GM12878 (cell line): ENCODE measurements at regions of chr2 and their contacts with region 1.

Region 1: GRCh38 chr2:27281855-27282559 is at the start of gene TRIM54:
- DNase-seq: no peak
- ATAC-seq: no peak
- H3K4me3 ChIP-seq: no peak within 1 kb of the TSS
- H3K27ac ChIP-seq: no peak within 1 kb of the TSS
- H3K4me1 ChIP-seq: no peaks in the 10 kb centered on the region
- H3K27me3 ChIP-seq: peaks cover 0 to 6% of the 10 kb centered on the region in 2 experiments; a peak in 2 of 4 replicates
- CTCF ChIP-seq: no peak
- EP300 ChIP-seq: no peak
- POLR2A ChIP-seq: no peak
- RAD21 ChIP-seq: no peak
- polyA plus RNA-seq, gene TRIM54: not detected

Region 2: DNA sequence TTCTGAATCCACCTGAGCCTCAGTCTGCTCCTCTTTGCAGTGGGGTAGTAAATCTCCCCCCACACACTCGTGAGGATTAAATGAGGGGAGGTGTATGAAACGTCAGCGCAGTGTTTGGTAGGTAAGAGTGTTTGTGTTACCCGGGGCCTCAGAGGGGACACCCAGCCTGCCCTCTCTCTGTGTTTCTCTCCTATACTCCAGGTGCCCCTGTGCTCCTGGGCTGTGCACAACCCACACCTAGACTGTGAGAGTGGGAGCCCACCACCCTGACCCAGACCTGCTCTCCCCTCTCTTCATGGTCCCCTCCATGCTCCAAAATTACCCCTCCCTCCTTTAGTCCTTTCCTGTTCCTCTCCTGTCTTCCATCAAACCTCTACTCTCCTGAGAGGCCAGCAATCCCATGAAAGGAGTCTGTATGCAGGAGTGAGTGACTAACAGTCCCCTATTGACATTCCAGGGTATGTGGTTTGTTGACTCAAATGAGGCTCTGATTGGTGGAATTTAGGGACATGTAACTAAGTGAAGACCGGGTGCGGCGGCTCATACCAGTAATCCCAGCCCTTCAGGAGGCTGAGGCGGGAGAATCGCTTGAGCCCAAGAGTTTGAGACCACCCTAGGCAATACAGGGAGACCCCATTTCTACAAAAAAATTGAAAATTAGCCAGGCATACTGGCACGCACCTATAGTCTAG is 651.2 kb before region 1 on chr2:
- CTCF ChIA-PET with region 1: no interaction called
- POLR2A ChIA-PET with region 1: no interaction called
- RAD21 ChIA-PET with region 1: no interaction called
- SMC1A ChIA-PET with region 1: no interaction called
- in situ Hi-C with region 1: no loop called
- intact Hi-C with region 1: no loop called
- DNase-seq: no peak
- ATAC-seq: no peak
- H3K4me3 ChIP-seq: no peak overlapping the region
- H3K27ac ChIP-seq: no peak overlapping the region
- H3K4me1 ChIP-seq: no peaks in the 10 kb centered on the region
- H3K27me3 ChIP-seq: peaks cover 2 to 5% of the 10 kb centered on the region in 2 experiments; a peak in 2 of 4 replicates
- CTCF ChIP-seq: no peak
- EP300 ChIP-seq: no peak
- POLR2A ChIP-seq: no peak
- RAD21 ChIP-seq: no peak

Region 3: DNA sequence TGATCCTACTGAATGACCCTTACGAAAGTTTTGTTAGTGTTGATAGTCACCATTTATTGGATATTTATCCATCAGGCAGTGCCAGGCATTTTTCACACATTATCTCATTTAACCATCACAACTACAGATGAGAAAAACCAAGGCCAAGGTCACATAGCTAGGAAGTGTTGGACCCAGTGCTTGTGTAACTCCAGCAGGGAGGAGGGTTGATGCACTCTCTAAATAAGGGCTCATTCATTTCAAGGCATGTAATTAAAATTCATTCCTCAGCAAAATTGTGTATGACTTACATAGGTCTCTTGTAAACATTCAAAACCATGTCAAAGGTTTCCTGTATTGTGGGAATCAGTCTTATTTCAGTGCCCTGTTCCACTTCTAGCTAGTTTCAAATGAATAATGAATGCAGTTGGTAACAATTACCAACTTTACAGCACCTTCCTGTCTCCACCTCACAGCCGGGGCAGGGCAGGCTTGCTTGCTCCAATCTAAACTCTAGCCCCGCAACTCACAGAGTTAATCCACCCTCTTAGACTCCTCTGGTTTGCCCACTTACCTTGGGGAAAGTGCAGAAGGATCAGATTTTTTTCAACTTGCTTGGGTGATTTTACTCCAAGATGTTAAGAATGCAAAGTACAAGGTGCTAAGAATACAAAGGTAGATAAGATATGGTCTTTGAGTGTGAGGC is 317.4 kb before region 1 on chr2:
- CTCF ChIA-PET with region 1: interaction called, 46 read pairs
- POLR2A ChIA-PET with region 1: no interaction called
- RAD21 ChIA-PET with region 1: interaction called, 23 read pairs
- SMC1A ChIA-PET with region 1: interaction called, 21 read pairs
- in situ Hi-C with region 1: loop called (anchors 5 kb)
- intact Hi-C with region 1: loop called (anchors 2 kb)
- DNase-seq: no peak
- ATAC-seq: no peak
- H3K4me3 ChIP-seq: no peak overlapping the region
- H3K27ac ChIP-seq: no peak overlapping the region
- H3K4me1 ChIP-seq: no peaks in the 10 kb centered on the region
- H3K27me3 ChIP-seq: peaks cover 1 to 2% of the 10 kb centered on the region in 2 experiments; a peak in 1 of 4 replicates
- CTCF ChIP-seq: no peak
- EP300 ChIP-seq: no peak
- POLR2A ChIP-seq: no peak
- RAD21 ChIP-seq: no peak

Region 4: DNA sequence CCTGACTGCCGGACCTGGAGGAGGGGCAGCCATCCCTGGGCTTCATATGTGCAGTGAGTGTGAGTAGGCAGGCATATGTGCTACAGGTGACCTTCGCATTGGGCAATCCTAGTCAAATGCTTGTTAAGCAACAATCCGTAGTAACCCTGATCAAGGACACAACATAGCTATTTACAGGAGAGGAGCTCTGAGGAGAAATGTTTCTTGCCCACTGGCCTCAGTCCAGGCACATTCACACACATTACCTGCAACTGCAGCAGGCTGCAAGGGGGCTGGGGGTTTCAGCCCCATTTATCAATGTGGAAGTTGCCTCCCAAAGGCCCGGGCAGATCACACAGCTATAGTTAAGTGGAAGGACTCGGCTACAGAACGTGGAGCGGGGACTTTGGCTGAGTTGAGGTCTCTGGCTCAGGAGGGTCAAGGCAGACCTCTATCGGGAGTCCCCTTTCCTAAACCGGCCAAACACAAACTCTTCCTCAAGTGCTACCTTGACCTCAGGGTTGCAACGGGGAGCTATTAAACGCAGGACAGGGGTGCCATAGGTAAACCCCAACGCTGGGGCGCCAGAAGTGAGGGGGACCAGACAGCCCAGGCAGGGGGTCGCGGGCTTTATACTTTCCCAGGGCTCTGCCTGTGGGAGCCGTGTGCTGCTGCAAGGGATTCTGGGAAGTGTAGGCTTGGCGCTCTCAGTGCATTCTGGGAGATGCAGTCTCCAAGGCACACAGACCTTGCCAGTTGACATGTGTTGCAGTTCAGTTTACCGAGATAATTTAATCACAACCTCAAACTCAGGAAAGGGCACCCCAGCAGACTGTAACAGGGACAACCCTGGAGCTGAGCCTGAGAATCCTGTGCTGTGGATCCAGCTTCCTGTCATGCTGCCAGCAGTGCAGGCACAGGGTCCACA is 186.0 kb before region 1 on chr2:
- CTCF ChIA-PET with region 1: interaction called, 132 read pairs
- POLR2A ChIA-PET with region 1: no interaction called
- RAD21 ChIA-PET with region 1: interaction called, 39 read pairs
- SMC1A ChIA-PET with region 1: interaction called, 19 read pairs
- in situ Hi-C with region 1: loop called (anchors 5 kb)
- intact Hi-C with region 1: loop called (anchors 1 kb)
- DNase-seq: no peak
- ATAC-seq: peak; percentile 93
- H3K4me3 ChIP-seq: no peak overlapping the region
- H3K27ac ChIP-seq: no peak overlapping the region
- H3K4me1 ChIP-seq: no peaks in the 10 kb centered on the region; the same call in 1 of the 2 replicates
- H3K27me3 ChIP-seq: no peaks in the 10 kb centered on the region
- CTCF ChIP-seq: no peak
- EP300 ChIP-seq: no peak
- POLR2A ChIP-seq: no peak
- RAD21 ChIP-seq: no peak

Region 5: DNA sequence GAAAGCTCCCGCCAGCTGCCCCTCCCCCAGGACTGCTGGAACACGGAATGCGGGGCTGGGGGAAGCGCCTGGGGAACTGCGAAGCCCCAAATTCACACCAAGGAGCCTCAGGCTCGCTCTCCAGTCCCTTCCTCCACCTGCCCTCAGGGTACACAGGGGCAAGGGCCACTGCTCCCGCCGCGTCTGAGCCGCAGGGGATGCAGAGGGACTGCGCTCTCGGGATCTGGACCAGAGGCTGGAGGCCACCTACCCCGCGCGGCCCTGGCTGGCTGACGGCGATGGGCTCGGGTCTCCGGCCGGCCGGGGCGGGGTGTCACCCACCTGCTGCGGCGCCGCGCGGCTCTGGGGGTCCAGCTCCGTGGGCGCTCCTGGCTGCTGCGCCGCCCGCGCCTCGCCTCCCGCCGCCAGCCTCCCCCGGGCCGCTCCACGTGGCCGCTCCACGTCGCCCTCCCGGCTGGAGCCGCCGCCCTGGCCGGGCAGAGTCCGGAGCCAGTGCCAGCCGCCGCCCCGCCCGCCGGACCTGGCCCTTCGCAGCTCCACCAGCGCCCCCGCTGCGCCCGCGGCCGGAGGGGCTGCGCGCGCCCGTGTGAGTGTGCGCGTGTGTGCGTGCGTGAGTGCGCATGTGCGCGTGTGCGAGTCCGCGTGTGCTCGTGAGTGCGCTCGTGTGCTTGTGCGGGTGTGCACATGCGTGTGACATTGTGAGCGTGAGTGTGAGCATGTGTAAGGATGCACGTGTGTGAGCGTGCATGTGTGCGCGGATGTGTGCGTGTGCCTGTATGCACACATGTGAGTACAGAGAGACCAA is 163.3 kb before region 1 on chr2 and contains the start of gene CGREF1:
- CTCF ChIA-PET with region 1: interaction called, 14 read pairs
- POLR2A ChIA-PET with region 1: no interaction called
- RAD21 ChIA-PET with region 1: no interaction called
- SMC1A ChIA-PET with region 1: interaction called, 5 read pairs
- in situ Hi-C with region 1: no loop called
- intact Hi-C with region 1: no loop called
- DNase-seq: no peak
- ATAC-seq: no peak
- H3K4me3 ChIP-seq: no peak within 1 kb of the TSS
- H3K27ac ChIP-seq: no peak within 1 kb of the TSS
- H3K4me1 ChIP-seq: peaks cover 1% of the 10 kb centered on the region; the same call in 1 of the 2 replicates
- H3K27me3 ChIP-seq: peaks cover 6 to 7% of the 10 kb centered on the region in 2 experiments
- CTCF ChIP-seq: no peak
- EP300 ChIP-seq: no peak
- POLR2A ChIP-seq: no peak
- RAD21 ChIP-seq: no peak
- polyA plus RNA-seq, gene CGREF1: not detected

Region 6: GRCh38 chr2:27174316-27175040 is 107.5 kb before region 1 on chr2:
- CTCF ChIA-PET with region 1: interaction called, 20 read pairs
- POLR2A ChIA-PET with region 1: no interaction called
- RAD21 ChIA-PET with region 1: interaction called, 14 read pairs
- SMC1A ChIA-PET with region 1: interaction called, 9 read pairs
- in situ Hi-C with region 1: no loop called
- intact Hi-C with region 1: loop called (anchors 10 kb)
- DNase-seq: no peak
- ATAC-seq: peak; percentile 46; the same call in 2 of the 3 replicates
- H3K4me3 ChIP-seq: no peak overlapping the region
- H3K27ac ChIP-seq: no peak overlapping the region
- H3K4me1 ChIP-seq: peaks cover 15% of the 10 kb centered on the region
- H3K27me3 ChIP-seq: no peaks in the 10 kb centered on the region; a peak in 1 of 4 replicates
- CTCF ChIP-seq: no peak
- EP300 ChIP-seq: no peak
- POLR2A ChIP-seq: no peak
- RAD21 ChIP-seq: no peak

Region 7: GRCh38 chr2:27264753-27265535 is 17.1 kb before region 1 on chr2:
- CTCF ChIA-PET with region 1: interaction called, 52 read pairs
- POLR2A ChIA-PET with region 1: no interaction called
- RAD21 ChIA-PET with region 1: interaction called, 16 read pairs
- SMC1A ChIA-PET with region 1: interaction called, 20 read pairs
- in situ Hi-C with region 1: no loop called
- intact Hi-C with region 1: no loop called
- DNase-seq: no peak
- ATAC-seq: peak; percentile 80
- H3K4me3 ChIP-seq: peak overlapping the region; percentile 76
- H3K27ac ChIP-seq: no peak overlapping the region
- H3K4me1 ChIP-seq: peaks cover 18% of the 10 kb centered on the region
- H3K27me3 ChIP-seq: peaks cover 23 to 41% of the 10 kb centered on the region in 2 experiments
- CTCF ChIP-seq: peak; percentile 35 to 65 (median 62); a peak in 4 of 6 replicates
- EP300 ChIP-seq: no peak
- POLR2A ChIP-seq: no peak
- RAD21 ChIP-seq: no peak